Caco-2 (cell line): ENCODE measurements at regions of chr12 and their contacts with region 1.

Region 1: GRCh38 chr12:63103494-63104131 is 47.4 kb downstream of the AVPR1A start:
- DNase-seq: peak in 1 of 2 experiments; percentile 31
- H3K4me3 ChIP-seq: no peak overlapping the region
- H3K4me3 Mint-ChIP-seq: no peak overlapping the region
- H3K27ac Mint-ChIP-seq: no peak overlapping the region
- H3K4me1 ChIP-seq: no peaks in the 10 kb centered on the region
- H3K4me1 Mint-ChIP-seq: no peaks in the 10 kb centered on the region
- H3K27me3 ChIP-seq: no peaks in the 10 kb centered on the region
- H3K27me3 Mint-ChIP-seq: no peaks in the 10 kb centered on the region
- CTCF ChIP-seq: peak; percentile 60 to 84

Region 2: DNA sequence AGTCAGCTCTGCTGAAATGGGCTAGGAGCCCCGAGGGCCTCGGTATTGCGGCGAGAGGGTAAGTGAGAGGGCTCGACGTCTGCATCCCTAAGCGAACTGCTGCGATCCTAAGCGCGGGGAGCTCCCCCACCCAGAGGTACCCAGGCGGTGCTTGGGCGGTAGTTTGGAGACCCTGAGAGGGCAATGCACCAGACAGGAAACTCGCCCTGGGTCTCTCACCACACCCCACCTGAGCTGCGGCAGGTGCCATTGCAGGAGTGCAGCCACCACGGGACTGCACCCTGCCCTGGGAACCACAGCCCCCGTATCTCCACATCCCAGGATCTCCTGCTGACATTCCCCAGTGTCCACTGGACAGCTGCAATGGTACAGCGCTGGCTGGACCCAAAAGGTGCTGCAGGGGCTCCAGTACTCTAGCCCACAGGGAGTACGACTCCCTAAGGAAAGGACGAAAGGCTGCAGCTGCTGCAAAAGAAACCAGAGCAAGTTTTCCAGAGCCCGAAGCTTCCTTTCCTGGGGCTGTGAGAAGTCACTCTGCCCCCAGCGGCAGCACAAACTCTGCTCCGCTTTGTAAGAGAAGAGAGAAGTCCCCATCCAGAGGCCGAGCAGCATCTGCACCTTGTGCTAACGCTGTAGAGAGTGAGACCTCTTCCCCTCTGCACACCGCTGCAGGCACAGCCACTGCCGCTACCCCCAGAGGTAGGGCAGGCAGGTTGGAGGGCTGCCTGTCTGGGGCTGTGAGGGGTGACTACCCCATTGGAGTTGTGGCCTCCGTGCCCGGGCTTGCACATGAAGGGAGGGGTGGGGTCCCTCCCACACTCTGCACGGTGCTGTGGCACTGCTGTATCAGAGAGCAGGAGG is 668.1 kb before region 1 on chr12:
- CTCF ChIA-PET with region 1: no interaction called
- POLR2A ChIA-PET with region 1: no interaction called
- intact Hi-C with region 1: loop called (anchors 1 kb)
- DNase-seq: peak; percentile 63 to 70
- H3K4me3 ChIP-seq: peak overlapping the region; percentile 54
- H3K4me3 Mint-ChIP-seq: peak overlapping the region; percentile 93
- H3K27ac Mint-ChIP-seq: peak overlapping the region; percentile 39
- H3K4me1 ChIP-seq: no peaks in the 10 kb centered on the region
- H3K4me1 Mint-ChIP-seq: no peaks in the 10 kb centered on the region
- H3K27me3 ChIP-seq: no peaks in the 10 kb centered on the region
- H3K27me3 Mint-ChIP-seq: peaks cover 10% of the 10 kb centered on the region
- CTCF ChIP-seq: peak in 1 of 2 experiments; percentile 74

Region 3: DNA sequence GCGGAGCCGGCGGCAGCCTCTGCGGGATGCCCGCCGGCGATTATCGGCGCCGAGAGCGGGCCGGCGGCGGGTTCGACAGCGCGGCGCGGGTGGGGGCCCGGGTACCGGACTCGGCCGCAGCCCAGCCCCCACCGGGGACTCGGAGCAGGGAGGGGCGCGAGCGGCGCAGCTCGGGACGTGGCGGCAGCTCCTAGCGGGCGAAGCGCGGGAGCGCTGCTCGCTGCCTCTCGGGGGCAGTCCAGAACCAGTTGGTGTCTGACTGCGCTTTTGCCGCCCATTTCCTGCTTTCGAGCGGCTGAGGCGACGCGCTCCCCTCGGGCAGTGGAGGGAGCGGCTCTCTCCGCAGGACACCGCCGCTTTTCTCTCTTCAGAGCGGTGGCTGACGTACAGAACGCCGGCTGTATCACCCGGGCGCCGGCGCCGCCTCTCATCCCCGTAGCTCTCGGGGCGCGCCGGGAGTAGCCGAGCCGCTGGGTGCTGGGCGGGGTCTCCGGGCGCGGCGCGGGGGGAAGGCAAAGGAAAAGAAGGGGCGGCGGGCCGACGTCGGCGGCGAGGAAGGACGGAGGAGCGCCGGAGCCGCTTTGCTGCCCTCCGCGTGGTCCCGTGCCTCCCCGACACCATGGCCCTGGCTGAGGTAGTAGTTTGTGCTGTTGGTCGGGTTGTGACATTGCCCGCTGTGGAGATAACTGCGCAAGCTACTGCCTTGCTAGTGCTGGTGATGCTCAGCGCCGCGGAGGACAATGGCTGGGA is 500.4 kb before region 1 on chr12:
- CTCF ChIA-PET with region 1: no interaction called
- POLR2A ChIA-PET with region 1: no interaction called
- intact Hi-C with region 1: loop called (anchors 10 kb)
- DNase-seq: peak; percentile 85 to 91
- H3K4me3 ChIP-seq: peak overlapping the region; percentile 93
- H3K4me3 Mint-ChIP-seq: peak overlapping the region; percentile 95
- H3K27ac Mint-ChIP-seq: peak overlapping the region; percentile 100
- H3K4me1 ChIP-seq: peaks cover 23% of the 10 kb centered on the region
- H3K4me1 Mint-ChIP-seq: peaks cover 9% of the 10 kb centered on the region
- H3K27me3 ChIP-seq: no peaks in the 10 kb centered on the region
- H3K27me3 Mint-ChIP-seq: no peaks in the 10 kb centered on the region
- CTCF ChIP-seq: peak in 1 of 2 experiments; percentile 58

Region 4: GRCh38 chr12:63037746-63038718 is 65.6 kb before region 1 on chr12:
- CTCF ChIA-PET with region 1: no interaction called
- POLR2A ChIA-PET with region 1: no interaction called
- intact Hi-C with region 1: no loop called
- DNase-seq: no peak
- H3K4me3 ChIP-seq: no peak overlapping the region
- H3K4me3 Mint-ChIP-seq: no peak overlapping the region
- H3K27ac Mint-ChIP-seq: no peak overlapping the region
- H3K4me1 ChIP-seq: no peaks in the 10 kb centered on the region; the same call in 1 of the 2 replicates
- H3K4me1 Mint-ChIP-seq: no peaks in the 10 kb centered on the region
- H3K27me3 ChIP-seq: no peaks in the 10 kb centered on the region
- H3K27me3 Mint-ChIP-seq: no peaks in the 10 kb centered on the region
- CTCF ChIP-seq: no peak

Region 5: GRCh38 chr12:63129927-63130326 is 26.3 kb after region 1 on chr12:
- CTCF ChIA-PET with region 1: no interaction called
- POLR2A ChIA-PET with region 1: no interaction called
- intact Hi-C with region 1: no loop called
- DNase-seq: no peak
- H3K4me3 ChIP-seq: no peak overlapping the region
- H3K4me3 Mint-ChIP-seq: no peak overlapping the region
- H3K27ac Mint-ChIP-seq: no peak overlapping the region
- H3K4me1 ChIP-seq: no peaks in the 10 kb centered on the region
- H3K4me1 Mint-ChIP-seq: no peaks in the 10 kb centered on the region
- H3K27me3 ChIP-seq: no peaks in the 10 kb centered on the region
- H3K27me3 Mint-ChIP-seq: no peaks in the 10 kb centered on the region
- CTCF ChIP-seq: no peak

Region 6: DNA sequence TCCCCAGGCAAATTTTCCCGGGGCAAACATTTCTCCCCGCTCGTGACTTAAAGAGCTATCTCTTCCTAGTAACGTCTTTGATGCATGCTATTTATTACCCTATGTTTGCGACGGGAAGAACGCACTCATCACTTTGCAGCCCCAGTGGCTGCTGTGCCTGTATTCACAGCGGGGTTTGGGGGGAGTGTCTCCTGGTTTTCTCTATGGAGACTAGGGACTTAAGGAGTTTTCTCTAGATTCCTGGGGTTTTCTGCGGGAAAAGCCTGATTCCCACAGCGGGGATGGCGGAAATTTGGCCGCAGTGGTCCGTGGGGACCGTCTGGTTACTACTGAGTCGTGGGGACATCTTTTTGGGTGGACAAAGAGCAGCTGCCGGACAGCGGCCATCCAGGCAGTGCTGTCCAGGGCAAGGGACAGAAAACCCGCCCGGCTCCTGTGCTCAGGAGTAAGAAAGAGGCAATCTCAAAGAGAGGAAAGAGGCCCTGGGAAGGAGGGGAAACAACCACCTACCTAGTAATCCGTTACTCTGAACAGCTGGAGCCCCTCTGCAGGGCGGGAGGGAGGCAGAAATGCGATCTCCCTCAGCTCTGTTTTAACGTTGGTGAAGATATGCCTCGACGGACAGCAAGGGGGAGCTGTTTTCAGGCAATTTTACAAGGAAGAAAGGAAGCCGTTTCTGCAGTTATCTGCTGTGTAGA is 48.2 kb after region 1 on chr12:
- CTCF ChIA-PET with region 1: no interaction called
- POLR2A ChIA-PET with region 1: no interaction called
- intact Hi-C with region 1: loop called (anchors 5 kb)
- DNase-seq: peak; percentile 35 to 40
- H3K4me3 ChIP-seq: no peak overlapping the region
- H3K4me3 Mint-ChIP-seq: no peak overlapping the region
- H3K27ac Mint-ChIP-seq: no peak overlapping the region
- H3K4me1 ChIP-seq: no peaks in the 10 kb centered on the region
- H3K4me1 Mint-ChIP-seq: no peaks in the 10 kb centered on the region
- H3K27me3 ChIP-seq: no peaks in the 10 kb centered on the region
- H3K27me3 Mint-ChIP-seq: no peaks in the 10 kb centered on the region
- CTCF ChIP-seq: peak; percentile 59 to 74

Region 7: DNA sequence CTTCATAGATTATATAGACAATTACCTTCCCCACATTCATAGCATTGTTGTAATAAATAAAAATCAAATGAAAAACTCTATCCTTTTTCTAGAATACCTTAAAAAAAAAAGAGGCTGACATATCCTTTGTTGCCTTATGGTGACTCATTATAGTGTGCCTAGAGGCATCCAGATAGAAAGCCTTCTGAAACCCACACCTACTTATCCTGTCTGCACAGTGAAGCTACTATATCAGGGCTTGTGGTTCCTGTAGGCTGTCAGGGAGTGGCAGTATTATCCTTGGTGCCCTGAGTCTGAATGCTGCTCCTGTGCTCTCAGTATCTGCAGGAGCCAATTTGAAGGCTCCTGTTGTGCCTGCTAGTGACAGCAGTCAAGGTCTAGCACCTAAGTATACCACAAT is 215.7 kb after region 1 on chr12:
- CTCF ChIA-PET with region 1: no interaction called
- POLR2A ChIA-PET with region 1: no interaction called
- intact Hi-C with region 1: loop called (anchors 5 kb)
- DNase-seq: peak in 1 of 2 experiments; percentile 26
- H3K4me3 ChIP-seq: no peak overlapping the region
- H3K4me3 Mint-ChIP-seq: no peak overlapping the region
- H3K27ac Mint-ChIP-seq: no peak overlapping the region
- H3K4me1 ChIP-seq: no peaks in the 10 kb centered on the region
- H3K4me1 Mint-ChIP-seq: no peaks in the 10 kb centered on the region
- H3K27me3 ChIP-seq: no peaks in the 10 kb centered on the region
- H3K27me3 Mint-ChIP-seq: no peaks in the 10 kb centered on the region
- CTCF ChIP-seq: peak in 1 of 2 experiments; percentile 8

Region 8: GRCh38 chr12:63450816-63451215 is 347.2 kb after region 1 on chr12:
- CTCF ChIA-PET with region 1: no interaction called
- POLR2A ChIA-PET with region 1: no interaction called
- intact Hi-C with region 1: loop called (anchors 5 kb)
- DNase-seq: no peak
- H3K4me3 ChIP-seq: no peak overlapping the region
- H3K4me3 Mint-ChIP-seq: no peak overlapping the region
- H3K27ac Mint-ChIP-seq: no peak overlapping the region
- H3K4me1 ChIP-seq: no peaks in the 10 kb centered on the region; the same call in 1 of the 2 replicates
- H3K4me1 Mint-ChIP-seq: no peaks in the 10 kb centered on the region
- H3K27me3 ChIP-seq: no peaks in the 10 kb centered on the region
- H3K27me3 Mint-ChIP-seq: no peaks in the 10 kb centered on the region
- CTCF ChIP-seq: no peak

Region 9: GRCh38 chr12:63802012-63802608 is 698.5 kb after region 1 on chr12:
- CTCF ChIA-PET with region 1: no interaction called
- POLR2A ChIA-PET with region 1: no interaction called
- intact Hi-C with region 1: loop called (anchors 5 kb)
- DNase-seq: peak in 1 of 2 experiments; percentile 17
- H3K4me3 ChIP-seq: no peak overlapping the region
- H3K4me3 Mint-ChIP-seq: no peak overlapping the region
- H3K27ac Mint-ChIP-seq: no peak overlapping the region
- H3K4me1 ChIP-seq: no peaks in the 10 kb centered on the region
- H3K4me1 Mint-ChIP-seq: no peaks in the 10 kb centered on the region
- H3K27me3 ChIP-seq: no peaks in the 10 kb centered on the region
- H3K27me3 Mint-ChIP-seq: no peaks in the 10 kb centered on the region
- CTCF ChIP-seq: peak; percentile 36 to 52